CD8-positive, alpha-beta T cell (primary cell): ENCODE measurements at regions of chr1 and their contacts with region 1.

Region 1: DNA sequence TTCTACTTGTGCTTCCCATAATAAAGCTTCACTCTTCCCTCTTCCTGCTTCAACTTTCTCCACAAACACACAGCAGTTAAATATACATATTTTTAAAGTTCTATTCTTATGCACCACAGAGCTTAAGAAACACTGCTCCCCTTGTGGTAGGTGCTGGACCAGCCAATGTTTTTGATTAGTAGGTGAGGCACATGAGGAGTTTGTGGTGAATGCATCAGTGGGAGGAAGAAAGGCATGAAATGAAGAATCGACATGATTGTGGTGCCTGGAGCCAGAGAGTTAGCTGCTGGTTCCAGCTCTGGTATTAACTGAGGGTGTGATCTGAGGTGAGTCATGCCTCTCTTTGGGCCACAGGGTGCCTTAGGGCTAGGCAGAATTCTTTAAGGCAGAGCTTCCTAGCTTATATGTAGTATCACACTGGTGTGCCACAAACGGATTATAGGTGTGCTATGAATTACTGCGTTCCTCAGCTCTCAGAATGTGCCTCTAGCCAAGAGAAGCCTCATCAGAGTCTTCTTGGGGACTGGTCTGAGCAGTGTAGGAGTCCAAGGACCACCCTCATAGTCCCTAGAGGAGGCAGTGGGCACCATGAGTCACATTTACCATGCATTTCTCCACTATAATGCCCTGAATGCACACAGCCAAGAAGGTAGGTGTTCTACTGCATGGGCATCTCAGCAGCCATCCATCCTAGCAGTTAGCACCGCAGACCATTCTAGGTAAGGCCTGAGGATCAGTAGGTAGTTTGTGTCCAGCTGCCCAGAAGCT is 97.4 kb upstream of the SGIP1 start:
- DNase-seq: peak in 4 of 9 experiments; percentile 31 to 58 (median 43)
- ATAC-seq: peak; percentile 87
- H3K4me3 ChIP-seq: no peak overlapping the region
- H3K4me3 Mint-ChIP-seq: no peak overlapping the region
- H3K27ac ChIP-seq: no peak overlapping the region
- H3K27ac Mint-ChIP-seq: no peak overlapping the region
- H3K4me1 ChIP-seq: no peaks in the 10 kb centered on the region
- H3K4me1 Mint-ChIP-seq: peaks cover 8% of the 10 kb centered on the region
- H3K27me3 ChIP-seq: no peaks in the 10 kb centered on the region
- H3K27me3 Mint-ChIP-seq: no peaks in the 10 kb centered on the region
- CTCF ChIP-seq: peak; percentile 22

Region 2: DNA sequence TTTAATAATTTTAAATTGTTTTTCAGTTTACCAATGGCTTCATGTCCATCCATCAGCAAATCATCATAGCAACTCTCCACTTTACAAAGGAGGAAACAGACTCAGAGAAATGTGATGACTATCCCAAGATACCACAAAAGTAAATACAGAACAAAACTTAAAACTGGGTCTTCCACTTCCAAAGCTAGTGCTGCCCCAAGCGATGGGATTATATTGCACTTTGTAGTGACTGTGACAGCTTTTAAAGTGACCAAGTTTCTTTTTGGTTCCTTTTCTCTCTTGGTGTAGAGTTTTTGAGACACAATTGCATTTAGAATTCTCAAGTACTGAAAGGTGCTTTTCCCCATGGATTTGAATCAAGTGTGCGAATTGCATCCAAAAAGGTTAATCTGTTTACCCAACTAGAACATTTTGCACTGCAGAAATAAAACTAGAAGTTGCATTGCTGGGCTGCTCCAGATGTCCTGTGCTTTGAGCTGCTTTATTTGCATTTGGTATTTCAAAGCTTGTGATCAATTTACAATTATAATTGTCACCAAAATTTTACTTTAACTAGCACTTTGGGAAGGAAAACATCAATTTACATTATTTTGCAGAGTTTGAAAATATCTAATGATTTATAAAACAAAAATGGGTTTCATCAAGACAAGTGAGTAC is 323.7 kb before region 1 on chr1:
- CTCF ChIA-PET with region 1: no interaction called
- POLR2A ChIA-PET with region 1: no interaction called
- intact Hi-C with region 1: no loop called
- DNase-seq: no peak
- ATAC-seq: no peak
- H3K4me3 ChIP-seq: no peak overlapping the region
- H3K4me3 Mint-ChIP-seq: no peak overlapping the region
- H3K27ac ChIP-seq: no peak overlapping the region
- H3K27ac Mint-ChIP-seq: no peak overlapping the region
- H3K4me1 ChIP-seq: no peaks in the 10 kb centered on the region
- H3K4me1 Mint-ChIP-seq: no peaks in the 10 kb centered on the region
- H3K27me3 ChIP-seq: no peaks in the 10 kb centered on the region
- H3K27me3 Mint-ChIP-seq: peaks cover 19% of the 10 kb centered on the region
- CTCF ChIP-seq: no peak

Region 3: DNA sequence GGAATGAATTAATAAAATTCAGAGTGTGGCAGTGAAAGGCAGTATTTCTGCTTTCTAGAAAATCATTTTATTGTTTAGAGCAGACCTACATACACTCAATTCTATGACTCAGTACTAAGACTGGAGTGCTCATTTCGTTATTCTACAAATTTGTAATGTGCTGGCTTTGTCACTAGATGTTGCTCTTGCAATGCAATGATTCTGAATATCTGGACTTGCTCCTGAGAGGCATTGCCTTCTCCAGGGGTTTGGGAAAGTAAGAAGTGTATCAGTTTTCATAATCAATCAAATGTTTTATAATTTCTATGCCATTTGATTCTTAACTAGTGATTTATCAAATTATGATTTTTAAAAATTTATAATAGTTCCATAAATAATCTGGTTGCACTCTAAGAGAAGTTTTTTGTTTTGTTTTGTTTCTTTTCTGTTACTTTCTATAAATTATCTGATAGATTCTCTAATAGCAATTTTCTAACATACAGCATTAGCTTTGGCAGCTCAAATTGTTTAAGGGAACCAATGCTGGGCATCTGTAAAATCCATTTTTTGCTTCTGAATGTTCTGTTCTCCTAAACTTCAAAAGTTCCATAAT is 183.1 kb before region 1 on chr1:
- CTCF ChIA-PET with region 1: interaction called, 677 read pairs
- POLR2A ChIA-PET with region 1: no interaction called
- intact Hi-C with region 1: no loop called
- DNase-seq: peak in 3 of 9 experiments; percentile 19 to 74 (median 61)
- ATAC-seq: peak; percentile 86
- H3K4me3 ChIP-seq: no peak overlapping the region
- H3K4me3 Mint-ChIP-seq: no peak overlapping the region
- H3K27ac ChIP-seq: no peak overlapping the region
- H3K27ac Mint-ChIP-seq: no peak overlapping the region
- H3K4me1 ChIP-seq: peaks cover 5% of the 10 kb centered on the region
- H3K4me1 Mint-ChIP-seq: peaks cover 13% of the 10 kb centered on the region
- H3K27me3 ChIP-seq: no peaks in the 10 kb centered on the region
- H3K27me3 Mint-ChIP-seq: no peaks in the 10 kb centered on the region
- CTCF ChIP-seq: peak; percentile 84

Region 4: GRCh38 chr1:66262211-66262963 is 174.2 kb before region 1 on chr1:
- CTCF ChIA-PET with region 1: interaction called, 677 read pairs
- POLR2A ChIA-PET with region 1: no interaction called
- intact Hi-C with region 1: no loop called
- DNase-seq: no peak
- ATAC-seq: no peak
- H3K4me3 ChIP-seq: no peak overlapping the region
- H3K4me3 Mint-ChIP-seq: no peak overlapping the region
- H3K27ac ChIP-seq: no peak overlapping the region
- H3K27ac Mint-ChIP-seq: no peak overlapping the region
- H3K4me1 ChIP-seq: peaks cover 12% of the 10 kb centered on the region
- H3K4me1 Mint-ChIP-seq: peaks cover 21% of the 10 kb centered on the region
- H3K27me3 ChIP-seq: no peaks in the 10 kb centered on the region
- H3K27me3 Mint-ChIP-seq: no peaks in the 10 kb centered on the region
- CTCF ChIP-seq: no peak

Region 5: GRCh38 chr1:66374561-66375111 is 61.9 kb before region 1 on chr1:
- CTCF ChIA-PET with region 1: no interaction called
- POLR2A ChIA-PET with region 1: no interaction called
- intact Hi-C with region 1: loop called in 1 of 2 experiments (anchors 5 kb)
- DNase-seq: peak in 3 of 9 experiments; percentile 22 to 77 (median 61)
- ATAC-seq: peak; percentile 69
- H3K4me3 ChIP-seq: no peak overlapping the region
- H3K4me3 Mint-ChIP-seq: peak overlapping the region; percentile 63
- H3K27ac ChIP-seq: peak overlapping the region; percentile 19 to 75
- H3K27ac Mint-ChIP-seq: peak overlapping the region; percentile 94
- H3K4me1 ChIP-seq: peaks cover 48% of the 10 kb centered on the region
- H3K4me1 Mint-ChIP-seq: peaks cover 64% of the 10 kb centered on the region
- H3K27me3 ChIP-seq: peaks cover 0 to under 1% of the 10 kb centered on the region in 2 experiments
- H3K27me3 Mint-ChIP-seq: no peaks in the 10 kb centered on the region
- CTCF ChIP-seq: no peak

Region 6: DNA sequence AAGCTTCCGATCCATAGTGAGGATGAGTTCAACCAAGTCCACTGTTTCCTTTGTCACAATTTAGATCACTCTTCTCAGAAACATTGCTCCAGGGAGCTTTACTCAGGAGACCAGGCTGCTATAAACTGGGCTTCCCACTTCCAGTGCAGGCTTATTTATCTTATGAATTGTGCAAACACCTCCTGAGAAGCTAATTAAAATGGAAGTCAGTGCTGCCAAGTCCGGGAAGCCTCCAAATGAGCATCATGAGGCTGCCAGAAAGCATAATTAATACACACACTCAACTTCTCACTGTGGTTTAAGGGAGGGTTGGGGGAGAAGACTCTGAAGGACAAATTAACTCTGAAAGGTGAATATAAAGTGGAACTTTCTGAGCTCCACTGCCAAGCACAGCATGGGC is 47.6 kb before region 1 on chr1:
- CTCF ChIA-PET with region 1: no interaction called
- POLR2A ChIA-PET with region 1: no interaction called
- intact Hi-C with region 1: loop called in 1 of 2 experiments (anchors 5 kb)
- DNase-seq: no peak
- ATAC-seq: no peak
- H3K4me3 ChIP-seq: no peak overlapping the region
- H3K4me3 Mint-ChIP-seq: no peak overlapping the region
- H3K27ac ChIP-seq: no peak overlapping the region
- H3K27ac Mint-ChIP-seq: no peak overlapping the region
- H3K4me1 ChIP-seq: no peaks in the 10 kb centered on the region
- H3K4me1 Mint-ChIP-seq: no peaks in the 10 kb centered on the region
- H3K27me3 ChIP-seq: no peaks in the 10 kb centered on the region
- H3K27me3 Mint-ChIP-seq: no peaks in the 10 kb centered on the region
- CTCF ChIP-seq: no peak

Region 7: GRCh38 chr1:66452982-66453381 is 16.4 kb after region 1 on chr1:
- CTCF ChIA-PET with region 1: no interaction called
- POLR2A ChIA-PET with region 1: no interaction called
- intact Hi-C with region 1: no loop called
- DNase-seq: no peak
- ATAC-seq: no peak
- H3K4me3 ChIP-seq: no peak overlapping the region
- H3K4me3 Mint-ChIP-seq: no peak overlapping the region
- H3K27ac ChIP-seq: no peak overlapping the region
- H3K27ac Mint-ChIP-seq: no peak overlapping the region
- H3K4me1 ChIP-seq: no peaks in the 10 kb centered on the region
- H3K4me1 Mint-ChIP-seq: no peaks in the 10 kb centered on the region
- H3K27me3 ChIP-seq: no peaks in the 10 kb centered on the region
- H3K27me3 Mint-ChIP-seq: no peaks in the 10 kb centered on the region
- CTCF ChIP-seq: no peak